Calu3 (cell line): ENCODE measurements at regions of chr3 and their contacts with region 1.

Region 1: DNA sequence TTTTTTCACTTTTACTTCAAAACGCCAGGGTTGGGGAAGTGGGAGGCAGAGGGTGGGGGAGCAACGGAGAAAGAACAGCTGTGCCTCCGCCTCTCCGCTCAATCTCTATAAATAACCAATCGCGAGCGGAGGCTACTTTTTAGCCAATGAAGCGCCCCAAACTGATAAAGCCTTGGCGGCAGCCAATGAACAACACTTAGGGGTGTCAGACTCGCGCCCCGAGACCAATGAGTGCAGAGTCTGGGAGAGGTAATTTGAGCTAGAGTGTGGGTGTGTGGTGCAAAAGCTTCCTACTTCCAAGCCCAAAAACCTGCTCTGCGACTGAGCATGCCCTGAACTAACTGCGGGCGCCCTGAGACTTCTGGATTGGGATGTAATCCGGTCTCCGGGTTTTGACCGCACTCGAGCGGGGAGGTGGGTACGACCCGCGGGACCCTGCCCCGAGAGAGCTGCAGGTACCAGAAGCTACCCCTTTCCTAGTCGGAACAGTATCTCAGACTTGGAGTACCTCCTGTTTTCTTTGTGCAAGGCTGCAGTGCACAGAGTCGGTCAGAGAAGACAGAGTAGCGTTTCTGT is 800 bp upstream of the RAP2B start:
- DNase-seq: peak; percentile 97
- H3K4me3 Mint-ChIP-seq: peak overlapping the region; percentile 99
- H3K27ac Mint-ChIP-seq: peak overlapping the region; percentile 97
- H3K4me1 Mint-ChIP-seq: peaks cover 52% of the 10 kb centered on the region
- H3K27me3 Mint-ChIP-seq: no peaks in the 10 kb centered on the region
- CTCF ChIP-seq: no peak

Region 2: DNA sequence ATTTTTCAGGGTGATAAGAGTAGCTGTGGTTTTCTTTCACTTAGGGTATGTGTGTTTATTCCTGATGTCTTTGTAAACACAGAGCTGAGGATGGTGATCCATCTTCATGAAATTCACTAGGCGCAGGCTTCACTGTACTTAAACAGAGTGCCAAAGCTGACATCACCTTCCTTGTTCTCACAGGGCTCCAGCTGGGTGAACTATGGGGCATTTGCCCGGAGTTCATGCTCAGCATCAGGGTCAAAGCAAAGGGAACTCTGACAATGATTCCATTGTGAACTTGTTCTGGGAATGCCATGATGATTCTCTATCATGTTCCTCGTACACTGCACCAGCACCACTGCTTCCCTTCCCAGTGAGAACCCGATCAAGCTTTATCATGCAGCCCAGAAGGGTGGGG is 511.0 kb before region 1 on chr3:
- CTCF ChIA-PET with region 1: no interaction called
- intact Hi-C with region 1: no loop called
- DNase-seq: peak; percentile 41
- H3K4me3 Mint-ChIP-seq: peak overlapping the region; percentile 24
- H3K27ac Mint-ChIP-seq: no peak overlapping the region
- H3K4me1 Mint-ChIP-seq: peaks cover 9% of the 10 kb centered on the region
- H3K27me3 Mint-ChIP-seq: no peaks in the 10 kb centered on the region
- CTCF ChIP-seq: no peak

Region 3: DNA sequence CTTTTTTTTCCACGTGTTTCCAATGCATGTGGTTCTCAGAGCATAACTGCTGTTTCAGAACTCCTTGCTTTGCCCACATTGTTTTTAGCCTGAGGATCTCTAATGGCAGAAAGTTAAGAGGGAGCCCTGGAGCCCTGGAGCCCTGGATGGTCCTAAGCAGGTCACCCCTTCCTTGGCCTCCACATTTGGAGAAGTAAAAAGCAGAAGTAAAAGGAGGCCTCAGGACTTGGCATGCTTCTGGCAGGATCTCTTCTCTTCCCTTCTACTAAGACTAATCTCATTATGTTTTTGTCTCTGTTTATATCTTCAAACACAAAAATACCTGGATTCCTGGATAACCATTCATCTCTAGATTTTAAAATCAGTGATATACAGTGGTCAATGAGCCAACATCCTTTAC is 276.1 kb before region 1 on chr3:
- CTCF ChIA-PET with region 1: no interaction called
- intact Hi-C with region 1: no loop called
- DNase-seq: no peak
- H3K4me3 Mint-ChIP-seq: no peak overlapping the region
- H3K27ac Mint-ChIP-seq: no peak overlapping the region
- H3K4me1 Mint-ChIP-seq: no peaks in the 10 kb centered on the region
- H3K27me3 Mint-ChIP-seq: no peaks in the 10 kb centered on the region
- CTCF ChIP-seq: no peak

Region 4: GRCh38 chr3:153043729-153044328 is 117.4 kb before region 1 on chr3:
- CTCF ChIA-PET with region 1: interaction called, 34 read pairs
- intact Hi-C with region 1: loop called (anchors 1 kb)
- DNase-seq: no peak
- H3K4me3 Mint-ChIP-seq: peak overlapping the region; percentile 29
- H3K27ac Mint-ChIP-seq: peak overlapping the region; percentile 84
- H3K4me1 Mint-ChIP-seq: peaks cover 66% of the 10 kb centered on the region
- H3K27me3 Mint-ChIP-seq: no peaks in the 10 kb centered on the region
- CTCF ChIP-seq: no peak

Region 5: GRCh38 chr3:153096611-153097202 is 64.5 kb before region 1 on chr3:
- CTCF ChIA-PET with region 1: interaction called, 8 read pairs
- intact Hi-C with region 1: loop called (anchors 1 kb)
- DNase-seq: peak; percentile 77
- H3K4me3 Mint-ChIP-seq: peak overlapping the region; percentile 39
- H3K27ac Mint-ChIP-seq: peak overlapping the region; percentile 66
- H3K4me1 Mint-ChIP-seq: peaks cover 71% of the 10 kb centered on the region
- H3K27me3 Mint-ChIP-seq: no peaks in the 10 kb centered on the region
- CTCF ChIP-seq: no peak

Region 6: GRCh38 chr3:153138276-153139210 is 22.7 kb before region 1 on chr3:
- CTCF ChIA-PET with region 1: interaction called, 12 read pairs
- intact Hi-C with region 1: loop called (anchors 1 kb)
- DNase-seq: peak; percentile 92
- H3K4me3 Mint-ChIP-seq: peak overlapping the region; percentile 28
- H3K27ac Mint-ChIP-seq: peak overlapping the region; percentile 99
- H3K4me1 Mint-ChIP-seq: peaks cover 75% of the 10 kb centered on the region
- H3K27me3 Mint-ChIP-seq: no peaks in the 10 kb centered on the region
- CTCF ChIP-seq: no peak

Region 7: DNA sequence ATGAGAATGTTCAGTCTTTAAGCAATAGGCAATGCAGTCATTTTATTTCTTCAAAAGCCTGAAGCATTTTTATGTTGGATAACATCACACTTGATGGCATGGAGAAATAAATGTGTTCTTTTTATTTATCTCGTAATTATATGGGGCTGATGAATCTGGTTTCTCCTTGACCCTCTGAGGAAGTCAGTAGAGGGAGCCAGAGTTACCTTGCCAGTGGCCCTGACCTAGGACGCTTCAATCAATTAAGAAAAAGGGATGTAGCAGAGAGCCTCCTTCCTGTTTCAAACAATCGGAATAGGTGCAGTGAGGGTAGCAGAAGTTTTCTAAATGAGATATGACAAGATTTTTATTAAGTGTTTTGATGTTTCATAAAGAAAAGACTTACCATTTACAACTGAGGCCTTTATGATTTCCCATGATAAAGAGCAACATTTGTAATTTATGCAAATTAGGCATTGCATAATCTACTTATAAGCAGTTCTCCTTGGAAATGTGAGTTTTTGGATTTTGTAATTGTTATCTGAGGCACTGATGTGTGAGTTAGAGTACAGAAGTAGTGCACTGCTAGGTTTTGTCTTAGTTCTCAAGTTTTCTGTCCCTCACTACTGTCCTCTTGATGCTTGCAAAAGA is 129.9 kb after region 1 on chr3:
- CTCF ChIA-PET with region 1: interaction called, 10 read pairs
- intact Hi-C with region 1: loop called (anchors 1 kb)
- DNase-seq: peak; percentile 47
- H3K4me3 Mint-ChIP-seq: no peak overlapping the region
- H3K27ac Mint-ChIP-seq: no peak overlapping the region
- H3K4me1 Mint-ChIP-seq: peaks cover 37% of the 10 kb centered on the region
- H3K27me3 Mint-ChIP-seq: no peaks in the 10 kb centered on the region
- CTCF ChIP-seq: peak; percentile 71

Region 8: DNA sequence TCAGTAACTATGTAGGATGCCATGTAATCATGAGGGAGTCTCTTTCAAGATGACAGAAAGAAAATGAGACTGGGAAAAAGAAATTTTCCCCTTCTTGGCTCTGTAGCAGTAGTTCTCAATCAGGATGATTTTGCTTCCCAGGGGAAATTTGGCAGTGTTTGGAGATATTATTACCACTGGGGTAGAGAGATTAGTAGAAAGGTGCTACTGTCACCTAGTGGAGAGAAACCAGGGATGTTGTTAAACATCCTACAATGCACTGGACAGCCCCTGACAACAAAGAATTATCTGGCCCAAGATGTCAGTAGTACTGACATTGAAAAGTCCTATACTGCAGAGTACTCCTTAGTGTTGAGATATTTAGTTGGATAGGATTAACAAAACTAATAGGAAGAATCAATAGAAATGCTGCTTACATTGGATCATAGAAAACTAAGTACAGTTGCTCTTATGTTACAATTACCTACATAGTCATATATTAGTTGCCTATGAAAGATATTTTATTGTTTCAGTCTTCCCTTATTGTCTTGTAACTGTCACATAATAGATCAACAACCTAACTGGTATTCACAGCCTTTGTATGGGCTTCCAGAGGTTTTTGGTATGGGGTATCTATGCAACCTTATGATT is 434.1 kb after region 1 on chr3:
- CTCF ChIA-PET with region 1: interaction called, 9 read pairs
- intact Hi-C with region 1: loop called (anchors 2 kb)
- DNase-seq: peak; percentile 32
- H3K4me3 Mint-ChIP-seq: no peak overlapping the region
- H3K27ac Mint-ChIP-seq: no peak overlapping the region
- H3K4me1 Mint-ChIP-seq: peaks cover 44% of the 10 kb centered on the region
- H3K27me3 Mint-ChIP-seq: no peaks in the 10 kb centered on the region
- CTCF ChIP-seq: peak; percentile 87

Region 9: DNA sequence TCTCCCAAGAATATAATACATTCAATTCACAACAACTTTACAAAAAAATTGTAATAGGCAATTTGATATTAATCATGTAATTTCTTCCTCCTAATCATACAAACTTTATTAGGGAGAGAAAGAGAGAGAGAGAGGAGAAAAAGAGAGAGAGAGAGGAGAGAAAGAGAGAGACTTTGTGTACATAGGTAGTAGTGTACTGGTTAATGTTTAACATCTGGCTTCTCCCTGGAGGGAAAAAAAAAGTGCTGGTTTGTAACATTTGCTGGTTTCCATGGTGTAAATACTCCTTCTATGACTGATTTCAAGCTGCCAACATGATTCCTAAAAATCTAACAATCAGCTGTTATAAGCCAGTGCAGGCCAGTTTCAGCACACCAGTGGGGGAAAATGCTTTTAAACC is 861.9 kb after region 1 on chr3:
- CTCF ChIA-PET with region 1: no interaction called
- intact Hi-C with region 1: loop called (anchors 1 kb)
- DNase-seq: peak; percentile 57
- H3K4me3 Mint-ChIP-seq: no peak overlapping the region
- H3K27ac Mint-ChIP-seq: peak overlapping the region; percentile 25
- H3K4me1 Mint-ChIP-seq: peaks cover 14% of the 10 kb centered on the region
- H3K27me3 Mint-ChIP-seq: no peaks in the 10 kb centered on the region
- CTCF ChIP-seq: no peak